ENCODE measurements at regions of chr10 and their contacts with region 1.

Region 1: GRCh38 chr10:67849331-67850011 is 11.5 kb upstream of the DNAJC12 start:
- DNase-seq: peak; percentile 88
- H3K4me3 ChIP-seq: peak overlapping the region; percentile 69 to 86
- H3K27ac ChIP-seq: peak overlapping the region; percentile 89 to 91
- H3K4me1 ChIP-seq: peaks cover 0 to 3% of the 10 kb centered on the region in 2 experiments; a peak in 1 of 4 replicates
- H3K27me3 ChIP-seq: no peaks in the 10 kb centered on the region
- CTCF ChIP-seq: no peak
- EP300 ChIP-seq: no peak
- RAD21 ChIP-seq: no peak

Region 2: DNA sequence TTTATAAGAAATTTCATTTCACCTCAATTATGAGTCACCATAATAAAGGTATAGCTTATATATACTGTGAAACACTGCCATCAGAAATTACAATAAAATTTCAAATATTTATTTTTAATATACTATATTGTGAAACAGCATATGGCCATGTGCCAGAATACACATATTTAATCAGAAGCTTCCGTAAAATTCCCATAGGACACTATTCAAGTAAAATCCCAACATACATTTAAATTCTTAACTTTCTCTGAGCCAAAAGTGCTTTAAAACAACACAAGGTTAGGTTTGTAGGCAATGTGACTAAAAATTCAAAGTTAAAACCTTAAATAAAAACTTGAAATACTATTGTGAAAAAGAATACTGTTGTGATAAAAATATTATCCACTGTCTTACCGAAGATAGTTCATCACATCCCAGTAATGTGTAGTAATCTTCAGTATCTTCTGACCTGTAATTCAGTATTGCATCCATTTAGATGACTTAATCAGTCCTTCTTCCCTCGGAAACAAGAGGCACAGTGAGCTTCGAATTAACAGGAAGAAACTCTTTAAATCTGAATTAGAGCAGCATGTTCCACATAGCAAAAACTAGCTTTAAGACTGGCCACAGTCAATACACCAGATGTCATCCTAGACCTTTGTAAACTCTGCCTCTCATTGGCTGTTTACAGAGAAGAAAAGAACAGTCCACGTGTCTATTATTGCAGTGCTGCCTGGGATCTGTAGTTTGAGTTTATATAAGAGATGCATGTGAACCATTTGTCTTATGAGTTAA is 11.7 kb before region 1 on chr10 and contains the start of gene DNAJC12:
- CTCF ChIA-PET with region 1: interaction called, 15 read pairs
- POLR2A ChIA-PET with region 1: no interaction called
- DNase-seq: peak; percentile 75
- H3K4me3 ChIP-seq: peak within 1 kb of the TSS; percentile 21 to 53; a peak in 3 of 4 replicates
- H3K27ac ChIP-seq: peak within 1 kb of the TSS; percentile 5 to 67; a peak in 3 of 4 replicates
- H3K4me1 ChIP-seq: peaks cover 0 to 4% of the 10 kb centered on the region in 2 experiments; a peak in 2 of 4 replicates
- H3K27me3 ChIP-seq: no peaks in the 10 kb centered on the region
- CTCF ChIP-seq: no peak
- EP300 ChIP-seq: no peak
- RAD21 ChIP-seq: no peak; the same call in 1 of the 2 replicates
- polyA plus RNA-seq, gene DNAJC12: 7.9 and 9.3 TPM in 2 replicates

Region 3: GRCh38 chr10:68073631-68074403 is 224.3 kb after region 1 on chr10:
- CTCF ChIA-PET with region 1: interaction called, 12 read pairs
- POLR2A ChIA-PET with region 1: no interaction called
- DNase-seq: no peak
- H3K4me3 ChIP-seq: peak overlapping the region; percentile 89 to 97
- H3K27ac ChIP-seq: peak overlapping the region; percentile 98 to 99
- H3K4me1 ChIP-seq: peaks cover 0 to 12% of the 10 kb centered on the region in 2 experiments; a peak in 3 of 4 replicates
- H3K27me3 ChIP-seq: no peaks in the 10 kb centered on the region
- CTCF ChIP-seq: no peak
- EP300 ChIP-seq: no peak; a peak in 1 of 4 replicates
- RAD21 ChIP-seq: no peak

Measured in SK-N-SH (cell line).